ENCODE measurements at regions of chr9 and their contacts with region 1.

Region 1: DNA sequence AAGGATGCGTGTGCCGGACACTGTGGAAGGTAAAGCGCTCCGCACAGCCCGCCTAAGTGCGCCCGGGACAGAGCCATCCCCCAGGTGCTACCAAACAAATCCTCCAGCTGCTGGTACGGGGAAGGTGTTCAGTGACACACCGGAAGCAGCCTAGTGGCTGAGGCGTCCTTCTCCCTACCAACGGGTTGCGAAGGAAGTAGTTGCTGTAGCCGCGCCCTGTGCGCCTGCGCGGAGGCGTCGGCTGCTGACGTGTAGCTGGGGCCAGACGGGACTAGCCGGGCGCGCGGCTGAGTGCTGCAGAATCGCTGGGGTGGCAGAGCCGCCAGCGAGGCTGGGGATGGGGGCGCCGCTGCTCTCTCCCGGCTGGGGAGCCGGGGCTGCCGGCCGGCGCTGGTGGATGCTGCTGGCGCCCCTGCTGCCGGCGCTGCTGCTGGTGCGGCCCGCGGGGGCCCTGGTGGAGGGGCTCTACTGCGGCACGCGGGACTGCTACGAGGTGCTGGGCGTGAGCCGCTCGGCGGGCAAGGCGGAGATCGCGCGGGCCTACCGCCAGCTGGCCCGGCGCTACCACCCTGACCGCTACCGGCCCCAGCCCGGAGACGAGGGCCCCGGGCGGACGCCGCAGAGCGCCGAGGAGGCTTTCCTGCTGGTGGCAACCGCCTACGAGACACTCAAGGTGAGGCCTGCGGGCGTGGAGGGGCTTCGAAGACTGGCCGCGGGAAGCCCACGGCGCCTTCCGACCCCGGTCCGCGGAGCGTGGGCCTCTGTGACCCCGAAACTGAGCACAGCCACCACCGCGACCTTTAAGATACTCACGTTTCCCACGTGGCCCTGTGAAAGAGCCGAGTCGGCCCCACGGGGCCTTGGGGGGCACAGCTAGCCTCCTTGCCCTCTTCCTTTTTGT is at the start of gene DNAJC25:
- DNase-seq: peak; percentile 94 to 99
- ATAC-seq: peak; percentile 91 to 98 (median 96)
- H3K4me3 ChIP-seq: peak within 1 kb of the TSS; percentile 56
- H3K4me3 Mint-ChIP-seq: peak within 1 kb of the TSS; percentile 91
- H3K27ac ChIP-seq: peak within 1 kb of the TSS; percentile 88
- H3K27ac Mint-ChIP-seq: peak within 1 kb of the TSS; percentile 89 to 93
- H3K4me1 ChIP-seq: peaks cover 14% of the 10 kb centered on the region
- H3K4me1 Mint-ChIP-seq: peaks cover 38 to 40% of the 10 kb centered on the region in 2 donors
- H3K27me3 ChIP-seq: no peaks in the 10 kb centered on the region
- H3K27me3 Mint-ChIP-seq: no peaks in the 10 kb centered on the region
- CTCF ChIP-seq: no peak
- total RNA-seq, gene DNAJC25: 5.1 to 5.9 (median 5.7) TPM

Region 2: GRCh38 chr9:111483862-111484571 is 147.3 kb before region 1 on chr9 and contains the start of gene ECPAS:
- intact Hi-C with region 1: loop called (anchors 2 kb)
- DNase-seq: peak; percentile 69 to 75
- ATAC-seq: peak; percentile 59 to 77 (median 71)
- H3K4me3 ChIP-seq: peak within 1 kb of the TSS; percentile 83
- H3K4me3 Mint-ChIP-seq: peak within 1 kb of the TSS; percentile 85
- H3K27ac ChIP-seq: peak within 1 kb of the TSS; percentile 78
- H3K27ac Mint-ChIP-seq: peak within 1 kb of the TSS; percentile 87 to 90
- H3K4me1 ChIP-seq: peaks cover 10% of the 10 kb centered on the region
- H3K4me1 Mint-ChIP-seq: peaks cover 21 to 31% of the 10 kb centered on the region in 2 donors
- H3K27me3 ChIP-seq: no peaks in the 10 kb centered on the region
- H3K27me3 Mint-ChIP-seq: peaks cover 3 to 7% of the 10 kb centered on the region in 2 donors
- CTCF ChIP-seq: no peak
- total RNA-seq, gene ECPAS: 58.0 to 73.6 (median 70.7) TPM

Region 3: DNA sequence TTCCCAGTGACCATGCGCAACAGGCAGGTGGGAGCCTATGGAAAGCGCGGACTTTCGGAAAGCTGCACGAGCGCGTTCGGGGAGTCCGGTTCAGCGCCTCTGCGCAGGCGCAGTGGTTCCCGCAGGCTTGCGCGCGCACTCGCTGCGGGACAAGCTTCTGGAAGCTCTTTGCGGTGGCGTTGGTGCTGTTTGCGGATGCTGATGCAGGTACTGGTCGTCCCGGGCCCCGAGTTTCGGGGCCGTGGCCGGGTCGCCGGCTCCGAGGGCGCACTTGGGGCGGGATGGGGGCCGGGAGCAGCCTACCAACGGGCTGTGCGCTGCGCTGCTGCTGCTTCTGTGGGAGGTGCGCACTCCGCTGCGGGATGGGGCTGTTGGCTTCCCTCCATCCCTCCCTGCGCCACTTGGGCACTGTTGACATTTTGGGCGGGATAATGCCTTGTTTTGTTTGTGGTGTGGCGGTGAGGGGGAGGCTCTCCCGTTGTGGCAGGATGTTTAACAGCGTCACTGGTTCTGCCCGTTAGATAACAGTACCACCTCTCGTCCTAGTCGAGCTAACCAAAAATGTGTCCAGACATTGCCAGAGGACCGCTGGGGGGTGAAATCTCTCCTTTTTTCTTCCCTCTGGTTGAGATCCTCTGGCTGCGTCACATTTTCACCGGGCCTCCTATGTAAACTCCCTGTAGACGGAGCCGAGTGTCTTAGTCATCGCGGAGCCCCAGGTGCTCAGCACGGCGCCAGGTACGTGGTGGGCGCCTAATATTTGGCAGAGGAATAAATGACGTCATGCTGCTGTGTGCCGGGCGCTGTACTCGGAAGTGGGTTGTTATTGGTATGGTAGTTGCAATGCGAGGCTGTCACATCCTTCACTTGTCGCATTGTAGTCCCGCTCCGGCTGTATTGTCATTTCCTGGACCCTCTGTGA is 106.0 kb before region 1 on chr9 and contains the start of gene ZNF483:
- intact Hi-C with region 1: no loop called
- DNase-seq: peak; percentile 42 to 85
- ATAC-seq: peak; percentile 76 to 84 (median 82)
- H3K4me3 ChIP-seq: peak within 1 kb of the TSS; percentile 82
- H3K4me3 Mint-ChIP-seq: peak within 1 kb of the TSS; percentile 90
- H3K27ac ChIP-seq: peak within 1 kb of the TSS; percentile 53
- H3K27ac Mint-ChIP-seq: peak within 1 kb of the TSS; percentile 81 to 90
- H3K4me1 ChIP-seq: peaks cover 15% of the 10 kb centered on the region
- H3K4me1 Mint-ChIP-seq: peaks cover 16 to 20% of the 10 kb centered on the region in 2 donors
- H3K27me3 ChIP-seq: peaks cover 5% of the 10 kb centered on the region
- H3K27me3 Mint-ChIP-seq: peaks cover 0 to 22% of the 10 kb centered on the region in 2 donors
- CTCF ChIP-seq: no peak
- total RNA-seq, gene ZNF483: 5.7 to 7.4 (median 5.8) TPM

Region 4: GRCh38 chr9:111661802-111662521 is 30.6 kb after region 1 on chr9:
- intact Hi-C with region 1: loop called (anchors 1 kb)
- DNase-seq: peak; percentile 17 to 51
- ATAC-seq: peak; percentile 30 to 48 (median 33)
- H3K4me3 ChIP-seq: peak overlapping the region; percentile 69
- H3K4me3 Mint-ChIP-seq: peak overlapping the region; percentile 99
- H3K27ac ChIP-seq: peak overlapping the region; percentile 57
- H3K27ac Mint-ChIP-seq: peak overlapping the region; percentile 75 to 85
- H3K4me1 ChIP-seq: peaks cover 19% of the 10 kb centered on the region
- H3K4me1 Mint-ChIP-seq: peaks cover 26 to 31% of the 10 kb centered on the region in 2 donors
- H3K27me3 ChIP-seq: no peaks in the 10 kb centered on the region
- H3K27me3 Mint-ChIP-seq: no peaks in the 10 kb centered on the region
- CTCF ChIP-seq: no peak

Measured in natural killer cell (primary cell).